Activated naive CD4-positive, alpha-beta T cell treated with anti-CD3 and anti-CD28 coated beads for 36 hours (primary cell): ENCODE measurements at regions of chrX and their contacts with region 1.

Region 1: DNA sequence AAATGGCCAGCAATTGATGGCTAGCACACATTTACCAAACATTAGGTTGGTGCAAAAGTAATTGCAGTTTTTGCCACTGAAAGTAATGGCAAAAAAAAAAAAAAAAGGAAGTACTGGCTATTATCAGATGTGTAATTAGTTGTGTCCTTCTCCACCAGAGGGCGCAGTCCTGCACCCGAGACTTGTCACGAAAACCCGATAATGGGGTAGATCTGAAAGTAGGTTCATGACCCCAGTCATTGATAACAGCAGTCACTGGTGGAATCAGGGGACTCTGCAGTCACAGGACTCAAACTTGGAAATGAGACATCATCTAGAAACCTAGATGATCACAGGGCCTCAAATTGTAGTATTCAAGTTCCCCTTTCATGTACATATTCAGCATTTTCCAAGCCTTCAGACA is 13.1 kb upstream of the ACOT9 start:
- DNase-seq: peak; percentile 75
- H3K4me3 Mint-ChIP-seq: peak overlapping the region; percentile 24
- H3K27ac Mint-ChIP-seq: peak overlapping the region; percentile 66
- H3K4me1 Mint-ChIP-seq: peaks cover 8% of the 10 kb centered on the region
- H3K27me3 Mint-ChIP-seq: no peaks in the 10 kb centered on the region

Region 2: GRCh38 chrX:23373129-23373804 is 382.9 kb before region 1 on chrX:
- CTCF ChIA-PET with region 1: no interaction called
- intact Hi-C with region 1: no loop called
- DNase-seq: no peak
- H3K4me3 Mint-ChIP-seq: no peak overlapping the region
- H3K27ac Mint-ChIP-seq: no peak overlapping the region
- H3K4me1 Mint-ChIP-seq: no peaks in the 10 kb centered on the region
- H3K27me3 Mint-ChIP-seq: peaks cover 6% of the 10 kb centered on the region

Region 3: DNA sequence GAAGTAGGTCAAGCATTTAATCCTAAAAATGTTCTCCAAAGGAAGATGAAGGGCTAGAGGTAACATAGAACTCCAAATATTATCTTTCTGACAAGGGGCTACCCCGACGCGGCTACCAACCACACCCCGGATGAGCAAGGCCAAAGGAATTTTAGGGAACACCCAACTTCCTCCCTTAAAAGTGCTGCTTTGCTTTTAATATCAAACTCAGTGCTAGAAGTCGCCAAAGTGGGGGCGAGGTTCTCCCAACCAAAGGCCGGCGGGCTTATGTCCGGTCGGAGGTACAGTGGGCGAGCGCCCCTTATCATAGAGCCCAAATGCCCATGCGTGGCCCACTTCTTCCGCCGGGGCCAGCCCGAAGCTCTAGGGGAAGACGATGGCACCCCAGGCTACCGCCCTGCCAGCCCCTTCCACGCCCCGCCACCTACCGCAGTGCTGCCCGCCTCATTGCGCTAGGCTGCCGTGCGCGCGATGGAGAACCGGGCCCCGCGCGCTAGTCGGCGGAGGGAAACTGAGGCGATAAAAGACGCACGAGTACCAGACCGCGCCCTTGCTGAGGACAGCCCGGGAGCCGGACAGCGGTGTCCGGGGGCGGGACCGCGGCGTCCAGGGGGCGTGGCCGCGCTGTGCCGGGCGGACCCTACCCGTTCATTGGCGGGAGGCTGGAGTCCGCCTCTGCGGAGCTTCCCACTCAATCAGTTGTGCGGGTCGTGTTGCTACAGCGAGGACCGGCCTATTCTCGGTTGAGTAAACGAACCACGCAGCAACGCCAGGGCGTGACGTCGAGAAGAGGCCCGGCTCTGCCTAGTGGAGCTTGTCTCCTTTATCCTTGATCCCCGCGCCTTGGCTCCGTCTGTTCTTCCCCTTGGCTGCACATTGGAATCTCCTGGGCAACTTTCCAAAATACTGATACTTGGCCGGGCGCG is 13.2 kb before region 1 on chrX and contains the start of gene ACOT9:
- CTCF ChIA-PET with region 1: no interaction called
- intact Hi-C with region 1: loop called (anchors 1 kb)
- DNase-seq: peak; percentile 85
- H3K4me3 Mint-ChIP-seq: peak within 1 kb of the TSS; percentile 83
- H3K27ac Mint-ChIP-seq: peak within 1 kb of the TSS; percentile 84
- H3K4me1 Mint-ChIP-seq: peaks cover 23% of the 10 kb centered on the region
- H3K27me3 Mint-ChIP-seq: no peaks in the 10 kb centered on the region
- total RNA-seq, gene ACOT9: 46.8 to 49.7 TPM

Region 4: GRCh38 chrX:23773601-23774175 is 17.5 kb after region 1 on chrX:
- CTCF ChIA-PET with region 1: interaction called, 4 read pairs
- intact Hi-C with region 1: loop called (anchors 1 kb)
- DNase-seq: peak; percentile 67
- H3K4me3 Mint-ChIP-seq: no peak overlapping the region
- H3K27ac Mint-ChIP-seq: peak overlapping the region; percentile 92
- H3K4me1 Mint-ChIP-seq: peaks cover 18% of the 10 kb centered on the region
- H3K27me3 Mint-ChIP-seq: no peaks in the 10 kb centered on the region

Region 5: GRCh38 chrX:23901805-23902204 is 145.6 kb after region 1 on chrX:
- CTCF ChIA-PET with region 1: interaction called, 19 read pairs
- intact Hi-C with region 1: loop called (anchors 1 kb)
- DNase-seq: peak; percentile 61
- H3K4me3 Mint-ChIP-seq: no peak overlapping the region
- H3K27ac Mint-ChIP-seq: no peak overlapping the region
- H3K4me1 Mint-ChIP-seq: peaks cover 11% of the 10 kb centered on the region
- H3K27me3 Mint-ChIP-seq: no peaks in the 10 kb centered on the region

Region 6: GRCh38 chrX:24054182-24055042 is 298.3 kb after region 1 on chrX and contains the start of gene EIF2S3:
- CTCF ChIA-PET with region 1: no interaction called
- intact Hi-C with region 1: loop called (anchors 1 kb)
- DNase-seq: peak; percentile 87
- H3K4me3 Mint-ChIP-seq: no peak within 1 kb of the TSS
- H3K27ac Mint-ChIP-seq: no peak within 1 kb of the TSS
- H3K4me1 Mint-ChIP-seq: peaks cover 10% of the 10 kb centered on the region
- H3K27me3 Mint-ChIP-seq: no peaks in the 10 kb centered on the region
- total RNA-seq, gene EIF2S3: 366 to 386 TPM